Calu3 (cell line): ENCODE measurements at regions of chr17 and their contacts with region 1.

Region 1: DNA sequence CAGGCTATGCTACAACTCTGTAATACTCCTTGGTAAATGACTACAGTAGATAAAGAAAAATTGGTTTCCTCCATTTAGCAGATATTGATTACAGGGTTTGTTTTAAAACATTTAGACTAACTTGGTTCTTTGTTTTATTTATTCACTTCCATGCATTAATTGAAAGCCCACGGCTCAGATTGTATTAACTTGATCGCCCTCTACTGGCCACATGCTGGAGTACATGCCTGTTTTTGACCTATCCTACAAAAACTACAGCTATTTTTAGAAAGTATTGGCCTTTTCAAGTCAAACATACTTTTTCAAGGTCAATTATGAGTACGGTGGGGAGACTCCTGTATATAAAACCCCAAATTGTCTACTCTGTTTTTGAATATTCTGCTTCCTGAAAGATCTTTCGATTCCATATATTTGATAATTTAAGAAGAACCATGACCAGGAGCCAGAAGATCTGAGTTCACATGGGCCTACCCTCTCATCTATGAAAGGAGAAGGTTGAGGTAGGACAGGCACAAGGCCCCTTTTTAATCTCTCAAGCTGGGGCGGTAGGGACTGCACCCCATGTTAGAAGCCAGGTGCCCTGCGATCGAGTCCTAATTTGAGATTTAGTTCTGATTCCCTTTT is 51.8 kb downstream of the CA10 start:
- DNase-seq: peak; percentile 71
- H3K4me3 Mint-ChIP-seq: no peak overlapping the region
- H3K27ac Mint-ChIP-seq: no peak overlapping the region
- H3K4me1 Mint-ChIP-seq: no peaks in the 10 kb centered on the region
- H3K27me3 Mint-ChIP-seq: no peaks in the 10 kb centered on the region
- CTCF ChIP-seq: peak; percentile 95

Region 2: DNA sequence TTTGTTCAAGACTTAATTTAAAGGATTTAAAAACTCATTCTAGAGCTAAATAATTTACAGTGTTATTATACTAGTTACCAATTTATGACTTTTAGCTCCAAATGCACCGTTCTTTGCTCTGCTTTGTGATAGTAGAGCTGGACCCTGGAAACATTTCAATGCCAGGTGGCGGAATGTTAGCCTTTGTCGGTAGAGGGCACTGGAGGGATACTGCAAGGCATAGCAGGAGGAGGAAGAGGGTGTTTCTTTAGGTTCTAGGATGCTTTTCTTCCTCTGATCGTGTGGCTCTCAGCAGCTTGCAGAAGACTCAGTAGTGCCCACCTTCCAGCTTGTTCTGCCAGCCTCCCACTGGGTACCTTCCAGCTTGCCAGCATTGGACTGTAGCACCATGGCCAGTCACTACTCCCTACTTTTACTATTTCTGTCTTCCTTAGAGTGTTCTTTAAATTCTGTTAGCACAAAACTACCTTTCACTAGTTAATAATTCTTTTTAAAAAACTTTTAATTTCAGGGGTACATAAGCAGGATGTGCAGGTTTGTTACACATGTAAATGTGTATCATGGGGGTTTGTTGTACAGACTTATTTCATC is 521.1 kb before region 1 on chr17:
- CTCF ChIA-PET with region 1: interaction called, 4 read pairs
- intact Hi-C with region 1: loop called (anchors 5 kb)
- DNase-seq: peak; percentile 63
- H3K4me3 Mint-ChIP-seq: no peak overlapping the region
- H3K27ac Mint-ChIP-seq: no peak overlapping the region
- H3K4me1 Mint-ChIP-seq: no peaks in the 10 kb centered on the region
- H3K27me3 Mint-ChIP-seq: peaks cover 58% of the 10 kb centered on the region
- CTCF ChIP-seq: peak; percentile 73

Region 3: GRCh38 chr17:51860954-51861561 is 245.7 kb before region 1 on chr17:
- CTCF ChIA-PET with region 1: interaction called, 4 read pairs
- intact Hi-C with region 1: loop called (anchors 1 kb)
- DNase-seq: peak; percentile 82
- H3K4me3 Mint-ChIP-seq: no peak overlapping the region
- H3K27ac Mint-ChIP-seq: no peak overlapping the region
- H3K4me1 Mint-ChIP-seq: no peaks in the 10 kb centered on the region
- H3K27me3 Mint-ChIP-seq: peaks cover 90% of the 10 kb centered on the region
- CTCF ChIP-seq: peak; percentile 89

Region 4: GRCh38 chr17:52147872-52148271 is 41.1 kb after region 1 on chr17:
- CTCF ChIA-PET with region 1: no interaction called
- intact Hi-C with region 1: loop called (anchors 2 kb)
- DNase-seq: no peak
- H3K4me3 Mint-ChIP-seq: peak overlapping the region; percentile 13
- H3K27ac Mint-ChIP-seq: peak overlapping the region; percentile 84
- H3K4me1 Mint-ChIP-seq: peaks cover 62% of the 10 kb centered on the region
- H3K27me3 Mint-ChIP-seq: no peaks in the 10 kb centered on the region
- CTCF ChIP-seq: no peak

Region 5: GRCh38 chr17:52170963-52171572 is 64.3 kb after region 1 on chr17:
- CTCF ChIA-PET with region 1: interaction called, 4 read pairs
- intact Hi-C with region 1: loop called (anchors 1 kb)
- DNase-seq: peak; percentile 79
- H3K4me3 Mint-ChIP-seq: no peak overlapping the region
- H3K27ac Mint-ChIP-seq: peak overlapping the region; percentile 17
- H3K4me1 Mint-ChIP-seq: peaks cover 10% of the 10 kb centered on the region
- H3K27me3 Mint-ChIP-seq: no peaks in the 10 kb centered on the region
- CTCF ChIP-seq: peak; percentile 81